ENCODE measurements at regions of chr11 and their contacts with region 1.

Region 1: GRCh38 chr11:35013514-35014233 is 97.3 kb downstream of the PDHX start:
- DNase-seq: peak; percentile 47
- H3K4me3 Mint-ChIP-seq: peak overlapping the region; percentile 51
- H3K27ac Mint-ChIP-seq: peak overlapping the region; percentile 88
- H3K4me1 Mint-ChIP-seq: peaks cover 53% of the 10 kb centered on the region
- H3K27me3 Mint-ChIP-seq: peaks cover 9% of the 10 kb centered on the region

Region 2: GRCh38 chr11:34653826-34654490 is 359.7 kb before region 1 on chr11:
- intact Hi-C with region 1: loop called (anchors 2 kb)
- DNase-seq: no peak
- H3K4me3 Mint-ChIP-seq: no peak overlapping the region
- H3K27ac Mint-ChIP-seq: no peak overlapping the region
- H3K4me1 Mint-ChIP-seq: peaks cover 21% of the 10 kb centered on the region
- H3K27me3 Mint-ChIP-seq: peaks cover 66% of the 10 kb centered on the region

Region 3: GRCh38 chr11:34798985-34799384 is 214.7 kb before region 1 on chr11:
- intact Hi-C with region 1: no loop called
- DNase-seq: no peak
- H3K4me3 Mint-ChIP-seq: no peak overlapping the region
- H3K27ac Mint-ChIP-seq: no peak overlapping the region
- H3K4me1 Mint-ChIP-seq: no peaks in the 10 kb centered on the region
- H3K27me3 Mint-ChIP-seq: peaks cover 11% of the 10 kb centered on the region

Region 4: GRCh38 chr11:35050541-35050995 is 36.9 kb after region 1 on chr11:
- intact Hi-C with region 1: loop called (anchors 1 kb)
- DNase-seq: no peak
- H3K4me3 Mint-ChIP-seq: peak overlapping the region; percentile 79
- H3K27ac Mint-ChIP-seq: peak overlapping the region; percentile 93
- H3K4me1 Mint-ChIP-seq: peaks cover 69% of the 10 kb centered on the region
- H3K27me3 Mint-ChIP-seq: peaks cover 2% of the 10 kb centered on the region

Region 5: DNA sequence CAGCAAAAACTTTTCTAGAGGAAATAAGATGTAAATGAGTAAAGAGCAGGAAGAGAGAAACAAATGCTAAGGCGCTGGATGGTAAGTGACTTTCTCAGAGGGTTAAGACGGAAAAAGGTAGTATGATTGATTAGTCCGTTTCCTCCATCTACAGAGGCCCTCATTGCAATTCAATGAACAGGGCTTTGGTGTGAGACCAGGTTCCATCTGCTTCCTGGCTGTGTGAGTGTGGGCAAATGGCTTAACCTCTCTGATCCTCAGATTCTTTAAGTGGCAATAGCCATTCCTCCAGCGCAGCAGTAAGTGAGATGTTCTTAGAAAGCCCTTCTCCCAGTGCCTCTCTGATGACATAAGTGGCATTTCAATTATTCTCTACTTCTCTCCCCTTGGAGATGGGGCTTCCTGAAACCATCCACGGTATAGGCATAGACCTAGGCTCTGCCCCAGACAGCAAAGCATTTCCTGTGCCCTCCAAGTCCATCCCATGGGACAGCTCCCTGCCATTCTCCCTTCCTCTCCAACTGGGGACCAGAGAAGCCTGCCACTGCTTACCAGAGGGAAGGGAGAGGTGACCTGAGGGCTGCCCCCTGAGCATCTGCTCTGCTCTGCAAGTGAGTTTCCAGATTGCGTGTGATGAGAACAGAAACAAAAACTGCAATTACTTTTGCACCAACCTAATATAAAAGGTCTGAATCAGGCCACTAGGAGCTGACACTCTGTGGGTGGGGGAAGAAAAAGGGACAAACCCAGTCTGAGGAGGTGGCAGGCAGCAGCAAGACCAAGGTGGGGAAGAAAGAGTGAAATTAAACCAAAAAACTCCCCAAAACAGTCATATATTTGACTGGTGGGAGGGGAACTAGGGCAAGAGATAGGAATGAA is 112.6 kb after region 1 on chr11:
- intact Hi-C with region 1: loop called (anchors 1 kb)
- DNase-seq: no peak
- H3K4me3 Mint-ChIP-seq: peak overlapping the region; percentile 64
- H3K27ac Mint-ChIP-seq: peak overlapping the region; percentile 84
- H3K4me1 Mint-ChIP-seq: peaks cover 58% of the 10 kb centered on the region
- H3K27me3 Mint-ChIP-seq: no peaks in the 10 kb centered on the region

Region 6: GRCh38 chr11:35173011-35173511 is 159.4 kb after region 1 on chr11:
- intact Hi-C with region 1: loop called (anchors 1 kb)
- DNase-seq: no peak
- H3K4me3 Mint-ChIP-seq: peak overlapping the region; percentile 56
- H3K27ac Mint-ChIP-seq: peak overlapping the region; percentile 75
- H3K4me1 Mint-ChIP-seq: peaks cover 92% of the 10 kb centered on the region
- H3K27me3 Mint-ChIP-seq: no peaks in the 10 kb centered on the region

Region 7: DNA sequence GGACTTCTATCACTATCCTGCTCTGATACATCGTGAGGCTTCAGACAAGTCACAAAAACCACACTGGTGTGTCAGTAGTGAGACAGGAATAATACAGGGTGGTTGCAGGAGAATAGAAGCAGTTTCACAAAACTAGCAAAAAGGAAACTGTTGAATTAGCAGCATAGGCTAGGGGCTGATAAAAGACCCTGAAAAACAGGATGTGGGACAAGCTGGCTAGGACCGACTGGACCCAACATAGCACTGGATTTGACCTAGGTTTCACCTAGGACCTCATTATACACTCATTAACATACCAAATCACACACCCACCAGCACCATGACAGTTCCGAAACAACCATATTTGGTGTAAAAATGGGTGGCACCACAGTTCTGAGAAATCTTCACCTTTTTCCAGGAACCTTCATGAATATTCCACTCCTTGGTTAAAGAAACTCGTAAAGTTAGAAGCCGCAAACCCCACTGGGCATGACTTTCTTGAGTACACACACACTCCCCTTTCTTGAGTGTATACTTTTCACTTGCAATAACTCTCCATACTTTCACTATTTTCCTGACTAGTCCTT is 329.4 kb after region 1 on chr11:
- intact Hi-C with region 1: loop called (anchors 2 kb)
- DNase-seq: peak; percentile 65
- H3K4me3 Mint-ChIP-seq: peak overlapping the region; percentile 27
- H3K27ac Mint-ChIP-seq: peak overlapping the region; percentile 79
- H3K4me1 Mint-ChIP-seq: peaks cover 46% of the 10 kb centered on the region
- H3K27me3 Mint-ChIP-seq: peaks cover 9% of the 10 kb centered on the region